Activated CD8-positive, alpha-beta T cell treated with anti-CD3 and anti-CD28 coated beads, Interleukin-2, amount 10 ng/mL, durations not matched to agents 7 days and 5 days (primary cell): ENCODE measurements at regions of chr15 and their contacts with region 1.

Region 1: GRCh38 chr15:31365655-31366127 is 39.1 kb downstream of the KLF13 start:
- DNase-seq: peak; percentile 91
- ATAC-seq: peak; percentile 63
- H3K4me3 Mint-ChIP-seq: peak overlapping the region; percentile 54
- H3K27ac Mint-ChIP-seq: peak overlapping the region; percentile 94
- H3K4me1 Mint-ChIP-seq: peaks cover 99% of the 10 kb centered on the region
- H3K27me3 Mint-ChIP-seq: no peaks in the 10 kb centered on the region

Region 2: GRCh38 chr15:31200735-31201151 is 164.9 kb before region 1 on chr15:
- CTCF ChIA-PET with region 1: interaction called, 15 read pairs
- POLR2A ChIA-PET with region 1: no interaction called
- DNase-seq: peak; percentile 80
- ATAC-seq: peak; percentile 86
- H3K4me3 Mint-ChIP-seq: no peak overlapping the region
- H3K27ac Mint-ChIP-seq: peak overlapping the region; percentile 32
- H3K4me1 Mint-ChIP-seq: peaks cover 19% of the 10 kb centered on the region
- H3K27me3 Mint-ChIP-seq: peaks cover 14% of the 10 kb centered on the region

Region 3: GRCh38 chr15:31326156-31326732 is 39.4 kb before region 1 on chr15:
- CTCF ChIA-PET with region 1: interaction called, 11 read pairs
- POLR2A ChIA-PET with region 1: interaction called, 25 read pairs
- DNase-seq: peak; percentile 99
- ATAC-seq: peak; percentile 78
- H3K4me3 Mint-ChIP-seq: peak overlapping the region; percentile 91
- H3K27ac Mint-ChIP-seq: peak overlapping the region; percentile 97
- H3K4me1 Mint-ChIP-seq: peaks cover 58% of the 10 kb centered on the region
- H3K27me3 Mint-ChIP-seq: no peaks in the 10 kb centered on the region

Region 4: DNA sequence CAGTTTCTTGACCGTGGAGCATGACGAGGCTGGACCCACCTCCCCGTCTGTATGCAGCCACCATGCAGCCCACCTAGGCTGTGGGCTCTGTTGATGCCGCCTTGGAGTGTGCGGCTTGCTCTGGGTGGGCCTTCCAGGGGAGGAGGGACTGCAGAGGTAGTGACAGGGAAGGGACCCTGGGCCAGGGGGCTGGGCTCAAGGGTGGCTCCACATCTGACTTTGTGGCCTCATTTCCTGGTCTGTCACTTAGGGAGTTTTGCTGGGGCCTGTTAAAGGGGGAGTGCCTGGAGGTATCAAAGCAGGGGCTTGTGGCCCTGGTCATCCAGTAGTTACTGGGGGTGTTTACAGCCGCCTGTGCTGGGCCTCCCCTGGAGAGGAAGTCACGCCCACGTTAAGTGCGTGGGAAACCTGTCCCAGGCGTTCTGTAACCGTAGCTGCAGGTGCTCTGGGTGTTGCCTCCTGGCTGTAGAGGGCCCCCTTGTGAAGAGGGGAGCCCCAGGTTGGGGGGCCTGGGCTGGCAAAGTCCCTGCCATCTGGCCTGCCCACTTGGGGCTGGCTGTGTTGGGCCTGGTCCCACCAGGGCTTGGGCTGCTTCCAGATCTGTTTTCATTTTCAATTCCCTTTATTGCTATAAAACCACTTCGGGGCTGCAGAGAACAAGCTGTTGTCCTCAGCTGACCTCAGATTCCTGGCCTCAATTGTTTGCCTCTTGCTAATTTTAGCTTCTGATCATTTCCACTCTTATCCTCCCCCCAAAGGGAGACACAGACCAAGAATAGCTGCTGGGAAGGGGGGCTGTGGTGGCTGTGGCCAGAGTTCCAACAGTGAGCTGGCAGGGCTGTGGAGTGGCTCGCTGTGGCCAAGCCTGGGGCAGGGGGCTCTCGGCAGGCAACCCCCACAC is 12.5 kb before region 1 on chr15:
- CTCF ChIA-PET with region 1: interaction called, 211 read pairs
- POLR2A ChIA-PET with region 1: interaction called, 90 read pairs
- DNase-seq: peak; percentile 62
- ATAC-seq: peak; percentile 41
- H3K4me3 Mint-ChIP-seq: peak overlapping the region; percentile 70
- H3K27ac Mint-ChIP-seq: peak overlapping the region; percentile 97
- H3K4me1 Mint-ChIP-seq: peaks cover 98% of the 10 kb centered on the region
- H3K27me3 Mint-ChIP-seq: no peaks in the 10 kb centered on the region

Region 5: GRCh38 chr15:31391687-31392671 is 26.3 kb after region 1 on chr15:
- CTCF ChIA-PET with region 1: interaction called, 21 read pairs
- POLR2A ChIA-PET with region 1: interaction called, 18 read pairs
- DNase-seq: peak; percentile 87
- ATAC-seq: peak; percentile 87
- H3K4me3 Mint-ChIP-seq: peak overlapping the region; percentile 83
- H3K27ac Mint-ChIP-seq: peak overlapping the region; percentile 89
- H3K4me1 Mint-ChIP-seq: peaks cover 58% of the 10 kb centered on the region
- H3K27me3 Mint-ChIP-seq: no peaks in the 10 kb centered on the region

Region 6: DNA sequence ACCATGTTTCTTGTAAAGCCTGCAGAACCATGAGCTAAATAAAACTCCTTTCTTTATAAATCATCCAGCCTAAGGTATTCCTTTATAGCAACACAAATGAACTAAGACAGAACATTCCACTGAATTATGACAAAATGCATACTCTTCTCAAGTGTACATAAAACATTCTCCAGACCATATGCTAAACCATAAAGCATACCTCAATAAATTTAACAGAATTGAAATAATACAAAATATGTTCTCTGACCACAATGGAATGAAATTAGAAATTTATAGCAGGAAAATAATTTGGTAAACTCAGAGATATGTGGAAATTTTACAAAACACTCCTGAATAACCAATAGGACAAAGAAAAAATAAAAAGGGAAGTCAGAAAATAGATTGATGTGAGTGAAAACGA is 49.5 kb after region 1 on chr15:
- CTCF ChIA-PET with region 1: no interaction called
- POLR2A ChIA-PET with region 1: no interaction called
- DNase-seq: no peak
- ATAC-seq: no peak
- H3K4me3 Mint-ChIP-seq: no peak overlapping the region
- H3K27ac Mint-ChIP-seq: no peak overlapping the region
- H3K4me1 Mint-ChIP-seq: peaks cover 8% of the 10 kb centered on the region
- H3K27me3 Mint-ChIP-seq: no peaks in the 10 kb centered on the region

Region 7: DNA sequence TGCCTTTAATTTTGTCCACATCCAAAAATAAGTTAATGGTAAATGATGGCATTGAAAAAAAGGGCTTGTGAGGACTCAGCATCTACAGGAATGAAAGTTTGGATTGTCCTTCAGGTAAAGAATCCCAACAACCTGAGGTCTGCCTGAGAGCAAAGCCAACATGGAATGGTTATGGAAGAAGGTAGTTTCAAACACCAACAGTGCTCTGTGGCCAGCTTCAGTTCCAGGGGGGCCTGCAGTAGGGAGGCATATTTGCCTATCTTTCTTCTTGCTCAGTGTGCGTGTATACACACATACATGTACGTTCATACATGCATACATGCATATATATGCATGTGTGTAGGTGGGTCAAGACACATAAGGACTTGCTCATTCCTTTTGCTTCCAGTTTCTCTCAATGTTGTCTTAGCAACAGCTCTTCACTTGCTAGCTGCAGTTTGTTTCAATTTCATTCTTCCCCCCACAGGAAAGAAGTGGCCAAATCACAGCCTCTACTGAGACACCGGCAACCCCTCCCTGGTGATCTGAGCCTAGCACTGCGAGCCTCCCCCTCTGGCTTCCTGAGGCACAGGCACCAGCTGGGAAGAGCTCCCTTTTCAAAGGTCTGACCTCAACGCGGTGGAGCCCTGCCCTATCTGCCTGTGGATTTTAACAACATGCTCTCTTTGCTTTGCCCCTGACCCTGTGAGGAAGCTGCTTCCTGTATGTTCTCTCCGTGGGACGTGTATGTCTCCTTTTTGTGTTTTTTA is 107.1 kb after region 1 on chr15:
- CTCF ChIA-PET with region 1: interaction called, 28 read pairs
- POLR2A ChIA-PET with region 1: interaction called, 3 read pairs
- DNase-seq: peak; percentile 77
- ATAC-seq: peak; percentile 96
- H3K4me3 Mint-ChIP-seq: peak overlapping the region; percentile 62
- H3K27ac Mint-ChIP-seq: peak overlapping the region; percentile 89
- H3K4me1 Mint-ChIP-seq: peaks cover 38% of the 10 kb centered on the region
- H3K27me3 Mint-ChIP-seq: no peaks in the 10 kb centered on the region